Right ventricle myocardium inferior (tissue), 1 donor: ENCODE measurements at regions of chr14 and their contacts with region 1.

Region 1: GRCh38 chr14:95515596-95516552 is 576 bp downstream of the SYNE3 start:
- DNase-seq: peak; percentile 90
- ATAC-seq: peak; percentile 56

Region 2: DNA sequence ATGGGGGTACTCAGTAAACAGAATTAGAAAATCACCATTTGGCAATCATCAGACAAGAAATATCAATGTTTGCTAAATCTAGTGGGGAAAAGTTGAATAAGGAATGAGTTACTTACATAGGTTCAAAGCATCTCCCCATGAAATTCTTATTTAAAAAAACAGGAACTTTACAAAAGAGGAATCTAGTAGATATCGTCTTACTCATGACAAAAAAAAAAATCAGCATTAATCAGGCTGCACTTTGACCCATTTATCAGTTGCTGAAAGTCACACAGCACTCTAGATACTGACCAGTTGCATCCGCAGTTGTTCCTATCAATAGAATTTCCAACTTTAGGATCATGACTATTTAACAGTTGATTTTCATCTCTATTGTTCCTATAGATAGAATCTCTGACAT is 352.7 kb before region 1 on chr14:
- intact Hi-C with region 1: loop called (anchors 5 kb)
- DNase-seq: no peak
- ATAC-seq: no peak

Region 3: GRCh38 chr14:95472819-95473251 is 43.0 kb before region 1 on chr14:
- intact Hi-C with region 1: loop called (anchors 5 kb)
- DNase-seq: no peak
- ATAC-seq: peak; percentile 26

Region 4: GRCh38 chr14:95609387-95609990 is 93.6 kb after region 1 on chr14:
- intact Hi-C with region 1: no loop called
- DNase-seq: no peak
- ATAC-seq: no peak